ENCODE measurements at regions of chr12 and their contacts with region 1.

Region 1: GRCh38 chr12:51341259-51342007 is 5.0 kb downstream of the CELA1 start:
- DNase-seq: peak; percentile 50
- H3K4me3 ChIP-seq: no peak overlapping the region
- H3K27ac ChIP-seq: no peak overlapping the region
- H3K4me1 ChIP-seq: no peaks in the 10 kb centered on the region
- H3K27me3 ChIP-seq: no peaks in the 10 kb centered on the region
- CTCF ChIP-seq: peak; percentile 83 to 94 (median 92)
- POLR2A ChIP-seq: no peak

Region 2: GRCh38 chr12:51056244-51056643 is 285.2 kb before region 1 on chr12:
- intact Hi-C with region 1: loop called (anchors 5 kb)
- DNase-seq: no peak
- H3K4me3 ChIP-seq: no peak overlapping the region
- H3K27ac ChIP-seq: no peak overlapping the region
- H3K4me1 ChIP-seq: no peaks in the 10 kb centered on the region
- H3K27me3 ChIP-seq: no peaks in the 10 kb centered on the region
- CTCF ChIP-seq: no peak
- POLR2A ChIP-seq: no peak

Region 3: GRCh38 chr12:51393676-51394545 is 52.5 kb after region 1 on chr12:
- intact Hi-C with region 1: no loop called
- DNase-seq: no peak
- H3K4me3 ChIP-seq: no peak overlapping the region
- H3K27ac ChIP-seq: no peak overlapping the region
- H3K4me1 ChIP-seq: no peaks in the 10 kb centered on the region
- H3K27me3 ChIP-seq: no peaks in the 10 kb centered on the region
- CTCF ChIP-seq: no peak
- POLR2A ChIP-seq: no peak

Region 4: GRCh38 chr12:51631591-51631990 is 290.2 kb after region 1 on chr12:
- intact Hi-C with region 1: no loop called
- DNase-seq: no peak
- H3K4me3 ChIP-seq: no peak overlapping the region
- H3K27ac ChIP-seq: no peak overlapping the region
- H3K4me1 ChIP-seq: no peaks in the 10 kb centered on the region
- H3K27me3 ChIP-seq: no peaks in the 10 kb centered on the region
- CTCF ChIP-seq: no peak
- POLR2A ChIP-seq: no peak

Measured in prostate gland (tissue), 2 donors.